ENCODE measurements at regions of chr14 and their contacts with region 1.

Region 1: GRCh38 chr14:23057757-23058653 is 685 bp upstream of the CDH24 start:
- DNase-seq: peak; percentile 80
- ATAC-seq: peak; percentile 73
- H3K4me3 Mint-ChIP-seq: peak overlapping the region; percentile 88
- H3K27ac Mint-ChIP-seq: no peak overlapping the region
- H3K4me1 Mint-ChIP-seq: peaks cover 18% of the 10 kb centered on the region
- H3K27me3 Mint-ChIP-seq: peaks cover 2% of the 10 kb centered on the region
- CTCF ChIP-seq: peak; percentile 58

Region 2: DNA sequence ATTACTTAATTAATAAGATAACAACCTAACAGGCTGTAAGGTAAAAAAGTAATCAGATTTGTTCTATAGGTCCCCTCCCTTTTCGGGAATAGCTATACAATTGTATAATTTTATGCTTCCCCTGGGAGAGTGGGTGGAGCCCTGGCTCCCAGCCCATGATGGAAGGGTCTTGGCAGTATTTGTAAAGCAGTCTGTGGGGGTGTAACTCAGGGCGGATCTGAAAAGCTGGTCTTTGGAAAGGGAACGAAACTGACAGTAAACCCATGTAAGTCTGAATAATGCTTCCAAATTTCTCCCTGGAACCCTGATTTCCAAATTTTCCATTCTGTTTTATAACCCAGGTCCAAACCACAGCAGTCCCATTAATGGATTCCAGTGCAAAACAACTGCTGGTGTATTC is 579.3 kb before region 1 on chr14:
- CTCF ChIA-PET with region 1: no interaction called
- POLR2A ChIA-PET with region 1: no interaction called
- intact Hi-C with region 1: loop called (anchors 5 kb)
- DNase-seq: no peak
- ATAC-seq: no peak
- H3K4me3 Mint-ChIP-seq: peak overlapping the region; percentile 42
- H3K27ac Mint-ChIP-seq: peak overlapping the region; percentile 85
- H3K4me1 Mint-ChIP-seq: peaks cover 98% of the 10 kb centered on the region
- H3K27me3 Mint-ChIP-seq: no peaks in the 10 kb centered on the region
- CTCF ChIP-seq: no peak

Region 3: DNA sequence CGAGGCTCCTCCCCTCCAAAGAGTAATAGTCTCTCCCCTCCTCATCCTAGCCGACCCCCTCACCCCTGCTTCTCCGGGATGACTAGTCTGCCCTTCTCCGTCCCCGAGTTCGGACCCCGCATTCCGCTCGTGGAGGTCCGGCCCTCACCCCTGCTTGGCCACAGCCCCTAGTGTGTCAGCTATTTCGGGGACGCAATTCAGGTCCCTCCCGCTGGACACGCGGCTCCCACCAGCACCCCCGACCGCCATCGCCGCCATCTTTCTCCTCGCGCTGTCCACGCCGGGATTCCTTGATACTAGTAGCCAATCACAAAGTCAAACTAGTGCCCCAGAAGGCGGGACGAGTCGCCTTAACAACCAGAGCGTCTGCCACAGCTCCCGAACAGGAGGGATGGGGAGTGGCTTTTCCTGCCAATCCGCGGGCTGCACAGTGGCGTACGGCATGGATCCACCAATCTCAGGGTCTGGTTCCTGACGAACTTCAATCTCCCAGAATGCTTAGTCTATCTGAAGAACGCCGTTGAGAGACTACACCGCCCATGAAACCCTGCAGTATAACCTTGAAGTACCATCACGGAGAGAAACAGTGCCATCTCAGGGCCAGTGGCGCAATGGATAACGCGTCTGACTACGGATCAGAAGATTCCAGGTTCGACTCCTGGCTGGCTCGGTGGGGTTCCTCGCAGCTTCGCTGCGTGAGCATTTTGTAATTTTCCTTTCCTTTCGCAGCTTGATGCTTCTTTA is 128.7 kb before region 1 on chr14 and contains the start of gene PRMT5:
- CTCF ChIA-PET with region 1: interaction called, 10 read pairs
- POLR2A ChIA-PET with region 1: interaction called, 3 read pairs
- intact Hi-C with region 1: loop called (anchors 1 kb)
- DNase-seq: peak; percentile 83
- ATAC-seq: peak; percentile 93
- H3K4me3 Mint-ChIP-seq: no peak within 1 kb of the TSS
- H3K27ac Mint-ChIP-seq: no peak within 1 kb of the TSS
- H3K4me1 Mint-ChIP-seq: peaks cover 14% of the 10 kb centered on the region
- H3K27me3 Mint-ChIP-seq: no peaks in the 10 kb centered on the region
- CTCF ChIP-seq: no peak
- total RNA-seq, gene PRMT5: 75.3 and 96.5 TPM in 2 replicates

Region 4: GRCh38 chr14:22994762-22995275 is 63.2 kb before region 1 on chr14:
- CTCF ChIA-PET with region 1: interaction called, 284 read pairs
- POLR2A ChIA-PET with region 1: interaction called, 18 read pairs
- intact Hi-C with region 1: loop called (anchors 1 kb)
- DNase-seq: no peak
- ATAC-seq: peak; percentile 73
- H3K4me3 Mint-ChIP-seq: no peak overlapping the region
- H3K27ac Mint-ChIP-seq: no peak overlapping the region
- H3K4me1 Mint-ChIP-seq: peaks cover 3% of the 10 kb centered on the region
- H3K27me3 Mint-ChIP-seq: no peaks in the 10 kb centered on the region
- CTCF ChIP-seq: no peak

Region 5: DNA sequence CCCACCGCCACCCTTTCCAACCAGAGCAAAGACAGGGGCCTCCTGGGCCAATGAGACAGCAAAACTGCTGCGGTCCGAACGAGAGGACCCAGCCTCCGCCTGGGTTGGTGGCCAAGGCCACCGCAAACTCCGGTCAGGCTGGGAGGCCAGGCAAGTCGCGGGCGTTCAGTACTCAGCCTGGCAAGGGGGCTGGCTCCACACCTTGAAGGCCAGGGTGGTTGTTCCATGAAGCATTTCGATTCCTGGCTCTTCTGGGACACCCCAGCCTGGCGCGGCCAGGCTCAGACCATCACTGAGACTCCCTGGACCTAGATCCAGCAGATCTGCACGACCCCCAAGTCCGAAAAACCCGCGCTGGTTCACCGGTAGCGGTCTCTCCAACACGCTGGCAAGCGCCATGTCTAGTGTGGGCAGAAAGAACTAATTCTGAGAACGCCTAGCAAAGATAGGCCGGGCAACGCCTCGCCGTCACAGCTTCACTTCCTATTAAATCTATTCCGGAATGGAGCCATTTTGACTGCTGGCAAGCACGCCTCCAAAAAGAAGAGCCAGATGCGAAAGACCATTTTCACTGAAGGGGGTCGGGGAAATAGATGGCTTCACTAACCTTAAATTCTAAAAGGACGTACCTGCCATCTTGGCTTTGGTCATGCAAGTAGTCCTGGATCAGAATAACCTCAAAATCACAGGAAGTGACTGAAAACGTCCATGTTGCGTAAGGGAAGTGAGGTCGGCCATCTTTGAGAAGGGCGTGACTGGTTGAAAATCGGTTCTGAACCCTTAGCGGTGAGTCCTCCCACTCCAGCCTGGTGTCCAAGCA is 23.3 kb before region 1 on chr14 and contains the start of gene PSMB5:
- CTCF ChIA-PET with region 1: interaction called, 4 read pairs
- POLR2A ChIA-PET with region 1: interaction called, 3 read pairs
- intact Hi-C with region 1: loop called (anchors 1 kb)
- DNase-seq: peak; percentile 67
- ATAC-seq: peak; percentile 93
- H3K4me3 Mint-ChIP-seq: peak within 1 kb of the TSS; percentile 84
- H3K27ac Mint-ChIP-seq: peak within 1 kb of the TSS; percentile 96
- H3K4me1 Mint-ChIP-seq: peaks cover 29% of the 10 kb centered on the region
- H3K27me3 Mint-ChIP-seq: no peaks in the 10 kb centered on the region
- CTCF ChIP-seq: no peak
- total RNA-seq, gene PSMB5: 53.3 and 67.5 TPM in 2 replicates

Region 6: GRCh38 chr14:23544511-23545447 is 486.8 kb after region 1 on chr14:
- CTCF ChIA-PET with region 1: no interaction called
- POLR2A ChIA-PET with region 1: no interaction called
- intact Hi-C with region 1: no loop called
- DNase-seq: no peak
- ATAC-seq: no peak
- H3K4me3 Mint-ChIP-seq: no peak overlapping the region
- H3K27ac Mint-ChIP-seq: no peak overlapping the region
- H3K4me1 Mint-ChIP-seq: no peaks in the 10 kb centered on the region
- H3K27me3 Mint-ChIP-seq: peaks cover under 1% of the 10 kb centered on the region
- CTCF ChIP-seq: no peak